ENCODE measurements at regions of chr2 and their contacts with region 1.

Region 1: DNA sequence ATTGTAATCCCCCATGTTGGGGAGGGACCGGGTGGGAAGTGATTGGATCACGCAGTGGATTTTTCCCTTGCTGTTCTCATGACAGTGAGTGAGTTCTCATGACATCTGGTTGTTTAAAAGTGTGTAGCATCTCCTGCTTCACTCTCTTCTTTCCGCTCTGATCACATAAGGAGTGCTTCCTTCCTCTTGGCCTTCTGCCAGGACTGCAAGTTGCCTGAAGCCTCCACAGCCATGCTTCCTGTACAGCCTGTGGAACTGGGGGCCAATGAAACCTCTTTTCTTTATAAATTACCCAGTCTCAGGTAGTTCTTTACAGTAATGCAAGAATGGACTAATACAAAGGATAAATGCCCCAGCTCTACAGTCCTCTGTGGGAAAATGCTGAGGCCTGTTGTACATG is 437.5 kb upstream of the NXPH2 start:
- DNase-seq: no peak
- H3K4me3 ChIP-seq: no peak overlapping the region
- H3K4me3 Mint-ChIP-seq: no peak overlapping the region
- H3K27ac Mint-ChIP-seq: no peak overlapping the region
- H3K4me1 ChIP-seq: no peaks in the 10 kb centered on the region
- H3K4me1 Mint-ChIP-seq: no peaks in the 10 kb centered on the region
- H3K27me3 ChIP-seq: no peaks in the 10 kb centered on the region
- H3K27me3 Mint-ChIP-seq: no peaks in the 10 kb centered on the region
- CTCF ChIP-seq: no peak

Region 2: GRCh38 chr2:139194546-139194945 is 23.1 kb before region 1 on chr2:
- CTCF ChIA-PET with region 1: no interaction called
- POLR2A ChIA-PET with region 1: no interaction called
- intact Hi-C with region 1: loop called (anchors 1 kb)
- DNase-seq: no peak
- H3K4me3 ChIP-seq: no peak overlapping the region
- H3K4me3 Mint-ChIP-seq: no peak overlapping the region
- H3K27ac Mint-ChIP-seq: no peak overlapping the region
- H3K4me1 ChIP-seq: no peaks in the 10 kb centered on the region
- H3K4me1 Mint-ChIP-seq: no peaks in the 10 kb centered on the region
- H3K27me3 ChIP-seq: no peaks in the 10 kb centered on the region
- H3K27me3 Mint-ChIP-seq: no peaks in the 10 kb centered on the region
- CTCF ChIP-seq: no peak

Region 3: GRCh38 chr2:139478206-139478914 is 260.7 kb after region 1 on chr2:
- CTCF ChIA-PET with region 1: no interaction called
- POLR2A ChIA-PET with region 1: no interaction called
- intact Hi-C with region 1: no loop called
- DNase-seq: no peak
- H3K4me3 ChIP-seq: no peak overlapping the region
- H3K4me3 Mint-ChIP-seq: no peak overlapping the region
- H3K27ac Mint-ChIP-seq: no peak overlapping the region
- H3K4me1 ChIP-seq: no peaks in the 10 kb centered on the region
- H3K4me1 Mint-ChIP-seq: no peaks in the 10 kb centered on the region
- H3K27me3 ChIP-seq: no peaks in the 10 kb centered on the region
- H3K27me3 Mint-ChIP-seq: no peaks in the 10 kb centered on the region
- CTCF ChIP-seq: peak in 1 of 2 experiments; percentile 29